CD4-positive, alpha-beta T cell (primary cell): ENCODE measurements at regions of chr1 and their contacts with region 1.

Region 1: GRCh38 chr1:181424786-181425403 is 58.4 kb upstream of the CACNA1E start:
- DNase-seq: peak; percentile 72 to 91 (median 76)
- ATAC-seq: peak; percentile 75
- H3K4me3 ChIP-seq: no peak overlapping the region
- H3K4me3 Mint-ChIP-seq: peak overlapping the region; percentile 68
- H3K27ac ChIP-seq: no peak overlapping the region
- H3K27ac Mint-ChIP-seq: peak overlapping the region; percentile 15
- H3K4me1 ChIP-seq: peaks cover 22% of the 10 kb centered on the region
- H3K4me1 Mint-ChIP-seq: peaks cover 11% of the 10 kb centered on the region
- H3K27me3 ChIP-seq: no peaks in the 10 kb centered on the region
- H3K27me3 Mint-ChIP-seq: peaks cover 38% of the 10 kb centered on the region
- CTCF ChIP-seq: peak; percentile 99

Region 2: DNA sequence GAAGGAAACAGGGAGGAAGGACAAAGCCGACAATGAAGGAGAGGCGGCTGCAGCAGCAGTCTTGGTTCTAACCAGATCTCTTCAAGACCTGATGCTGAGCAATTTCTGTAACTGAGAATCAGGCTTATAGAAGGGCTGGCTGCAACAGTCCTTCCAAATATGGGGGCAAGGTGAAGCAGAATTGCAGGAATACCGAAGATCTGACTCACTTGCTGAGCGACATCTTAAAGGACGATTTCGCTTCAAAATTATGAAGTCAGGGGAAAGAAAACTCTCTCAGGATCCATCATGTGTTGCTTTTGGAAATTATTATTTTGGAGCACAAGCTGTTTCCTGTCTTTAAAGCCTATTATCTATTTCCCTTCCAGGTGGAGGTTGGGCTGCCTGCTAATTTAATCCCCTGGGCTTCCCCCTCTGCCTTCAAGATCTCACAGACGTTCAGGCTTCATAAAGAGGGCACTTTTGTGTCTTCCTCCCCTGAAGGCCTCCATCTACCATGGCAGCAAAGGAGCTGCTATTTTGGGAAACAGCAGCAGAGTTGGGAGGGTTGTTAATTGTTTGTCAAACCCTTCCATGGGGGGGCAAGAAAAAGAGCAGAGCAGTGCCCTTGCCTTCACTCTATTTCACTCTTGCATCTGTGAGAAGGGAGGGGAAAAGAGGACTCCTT is 347.2 kb before region 1 on chr1:
- CTCF ChIA-PET with region 1: no interaction called
- POLR2A ChIA-PET with region 1: no interaction called
- intact Hi-C with region 1: loop called in 1 of 2 experiments (anchors 5 kb)
- DNase-seq: no peak
- ATAC-seq: no peak
- H3K4me3 ChIP-seq: no peak overlapping the region
- H3K4me3 Mint-ChIP-seq: no peak overlapping the region
- H3K27ac ChIP-seq: no peak overlapping the region
- H3K27ac Mint-ChIP-seq: no peak overlapping the region
- H3K4me1 ChIP-seq: no peaks in the 10 kb centered on the region
- H3K4me1 Mint-ChIP-seq: no peaks in the 10 kb centered on the region
- H3K27me3 ChIP-seq: peaks cover 0 to 6% of the 10 kb centered on the region in 2 experiments
- H3K27me3 Mint-ChIP-seq: peaks cover 21% of the 10 kb centered on the region
- CTCF ChIP-seq: no peak

Region 3: DNA sequence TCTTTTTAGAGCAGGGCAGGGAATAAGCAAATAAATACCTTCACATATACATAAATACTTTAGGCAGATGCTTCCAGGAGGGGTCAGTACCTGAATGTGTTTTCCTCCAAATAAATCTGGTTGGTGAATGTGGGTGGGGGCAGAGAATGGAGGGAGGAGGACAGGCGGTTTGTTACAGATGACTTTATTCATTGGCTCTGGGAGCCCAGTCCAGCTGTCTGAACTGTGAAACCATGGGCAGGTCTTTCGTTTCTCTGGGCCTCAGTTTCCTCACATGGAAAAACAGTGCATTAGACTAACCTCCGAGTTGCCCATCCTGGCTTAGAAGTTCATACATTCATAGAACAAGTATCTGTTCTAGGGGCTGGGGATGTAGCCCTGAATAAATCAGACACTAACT is 211.8 kb before region 1 on chr1:
- CTCF ChIA-PET with region 1: no interaction called
- POLR2A ChIA-PET with region 1: no interaction called
- intact Hi-C with region 1: loop called in 1 of 2 experiments (anchors 1 kb)
- DNase-seq: no peak
- ATAC-seq: no peak
- H3K4me3 ChIP-seq: no peak overlapping the region
- H3K4me3 Mint-ChIP-seq: no peak overlapping the region
- H3K27ac ChIP-seq: no peak overlapping the region
- H3K27ac Mint-ChIP-seq: no peak overlapping the region
- H3K4me1 ChIP-seq: no peaks in the 10 kb centered on the region
- H3K4me1 Mint-ChIP-seq: no peaks in the 10 kb centered on the region
- H3K27me3 ChIP-seq: no peaks in the 10 kb centered on the region
- H3K27me3 Mint-ChIP-seq: peaks cover 6% of the 10 kb centered on the region
- CTCF ChIP-seq: no peak

Region 4: DNA sequence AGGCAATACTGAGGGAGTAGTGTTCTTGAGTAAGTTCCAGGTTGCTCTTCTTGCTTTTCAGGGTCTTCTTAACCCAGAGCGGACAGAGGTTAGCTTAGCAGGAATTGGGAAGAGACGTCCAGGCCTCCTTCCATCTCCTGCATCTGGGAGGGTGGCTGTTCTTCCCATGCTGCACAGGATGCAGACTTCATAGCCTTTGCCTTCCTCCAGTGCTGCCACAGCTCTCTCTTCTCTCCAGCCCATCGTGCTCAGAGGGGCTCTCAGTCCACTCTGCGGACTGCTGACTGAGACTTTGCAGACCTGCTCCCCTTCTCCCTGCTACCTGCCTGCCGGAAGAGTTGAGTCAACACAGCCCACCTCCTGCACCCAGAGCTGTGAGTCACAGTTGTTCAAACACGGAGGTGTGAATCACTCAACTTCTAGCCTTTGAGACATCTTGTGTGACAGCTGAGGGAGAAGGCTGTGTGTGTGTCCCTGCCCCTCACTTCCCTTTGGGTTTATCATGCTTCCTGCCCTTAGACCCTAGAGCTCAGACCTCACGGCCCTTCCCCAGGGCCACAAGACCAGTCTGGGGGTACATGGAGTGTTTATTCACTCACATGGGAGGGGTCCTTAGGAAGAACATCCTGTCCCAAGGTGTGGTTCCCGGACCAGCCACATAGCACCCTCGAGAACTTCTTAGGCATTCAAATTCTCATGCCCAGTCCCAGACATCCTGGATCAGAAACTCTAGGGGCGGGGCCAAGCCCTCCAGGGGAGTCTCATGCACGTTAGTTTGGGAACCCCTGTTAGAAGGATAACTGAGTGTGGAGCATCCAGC is 99.9 kb before region 1 on chr1:
- CTCF ChIA-PET with region 1: no interaction called
- POLR2A ChIA-PET with region 1: no interaction called
- intact Hi-C with region 1: loop called in 1 of 2 experiments (anchors 5 kb)
- DNase-seq: peak in 8 of 14 experiments; percentile 8 to 44 (median 30)
- ATAC-seq: peak; percentile 26
- H3K4me3 ChIP-seq: no peak overlapping the region
- H3K4me3 Mint-ChIP-seq: no peak overlapping the region
- H3K27ac ChIP-seq: no peak overlapping the region
- H3K27ac Mint-ChIP-seq: no peak overlapping the region
- H3K4me1 ChIP-seq: peaks cover 7% of the 10 kb centered on the region
- H3K4me1 Mint-ChIP-seq: no peaks in the 10 kb centered on the region
- H3K27me3 ChIP-seq: peaks cover 0 to 10% of the 10 kb centered on the region in 2 experiments
- H3K27me3 Mint-ChIP-seq: peaks cover 4% of the 10 kb centered on the region
- CTCF ChIP-seq: no peak

Region 5: DNA sequence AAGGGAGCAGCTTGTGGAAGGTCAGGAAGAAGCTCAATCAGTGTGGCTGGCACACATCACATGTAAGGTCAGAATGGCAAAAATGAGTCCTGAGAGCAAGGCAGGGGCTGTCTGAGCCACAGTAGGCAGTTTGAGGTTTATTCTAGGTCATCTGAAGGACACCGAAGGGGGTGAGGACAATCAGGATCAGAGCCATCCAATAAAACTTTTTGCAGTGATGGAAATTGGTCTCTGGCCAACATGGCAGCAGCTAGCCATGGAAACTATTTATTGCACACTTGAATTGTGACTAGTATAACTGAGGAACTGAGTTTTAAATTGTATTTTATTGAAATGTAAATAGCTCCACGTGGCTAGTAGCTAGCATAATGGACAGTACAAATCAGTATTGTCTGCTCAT is 38.6 kb before region 1 on chr1:
- CTCF ChIA-PET with region 1: interaction called, 3 read pairs
- POLR2A ChIA-PET with region 1: no interaction called
- intact Hi-C with region 1: loop called in 1 of 2 experiments (anchors 5 kb)
- DNase-seq: no peak
- ATAC-seq: no peak
- H3K4me3 ChIP-seq: no peak overlapping the region
- H3K4me3 Mint-ChIP-seq: no peak overlapping the region
- H3K27ac ChIP-seq: no peak overlapping the region
- H3K27ac Mint-ChIP-seq: no peak overlapping the region
- H3K4me1 ChIP-seq: peaks cover 8% of the 10 kb centered on the region
- H3K4me1 Mint-ChIP-seq: peaks cover 22% of the 10 kb centered on the region
- H3K27me3 ChIP-seq: no peaks in the 10 kb centered on the region
- H3K27me3 Mint-ChIP-seq: no peaks in the 10 kb centered on the region
- CTCF ChIP-seq: no peak